ENCODE measurements at regions of chr15 and their contacts with region 1.

Region 1: GRCh38 chr15:54273928-54274327 is 295.7 kb downstream of the UNC13C start:
- DNase-seq: peak in 1 of 2 experiments; percentile 9
- H3K4me3 ChIP-seq: no peak overlapping the region
- H3K27ac ChIP-seq: no peak overlapping the region
- H3K4me1 ChIP-seq: no peaks in the 10 kb centered on the region
- H3K27me3 ChIP-seq: no peaks in the 10 kb centered on the region
- CTCF ChIP-seq: peak; percentile 39 to 70 (median 56)
- EP300 ChIP-seq: no peak
- POLR2A ChIP-seq: no peak
- RAD21 ChIP-seq: peak; percentile 56 to 66

Region 2: GRCh38 chr15:54253543-54253942 is 20.4 kb before region 1 on chr15:
- CTCF ChIA-PET with region 1: interaction called, 12 read pairs
- POLR2A ChIA-PET with region 1: no interaction called
- DNase-seq: no peak
- H3K4me3 ChIP-seq: no peak overlapping the region
- H3K27ac ChIP-seq: no peak overlapping the region
- H3K4me1 ChIP-seq: no peaks in the 10 kb centered on the region
- H3K27me3 ChIP-seq: no peaks in the 10 kb centered on the region
- CTCF ChIP-seq: no peak
- EP300 ChIP-seq: no peak
- POLR2A ChIP-seq: no peak
- RAD21 ChIP-seq: no peak

Region 3: DNA sequence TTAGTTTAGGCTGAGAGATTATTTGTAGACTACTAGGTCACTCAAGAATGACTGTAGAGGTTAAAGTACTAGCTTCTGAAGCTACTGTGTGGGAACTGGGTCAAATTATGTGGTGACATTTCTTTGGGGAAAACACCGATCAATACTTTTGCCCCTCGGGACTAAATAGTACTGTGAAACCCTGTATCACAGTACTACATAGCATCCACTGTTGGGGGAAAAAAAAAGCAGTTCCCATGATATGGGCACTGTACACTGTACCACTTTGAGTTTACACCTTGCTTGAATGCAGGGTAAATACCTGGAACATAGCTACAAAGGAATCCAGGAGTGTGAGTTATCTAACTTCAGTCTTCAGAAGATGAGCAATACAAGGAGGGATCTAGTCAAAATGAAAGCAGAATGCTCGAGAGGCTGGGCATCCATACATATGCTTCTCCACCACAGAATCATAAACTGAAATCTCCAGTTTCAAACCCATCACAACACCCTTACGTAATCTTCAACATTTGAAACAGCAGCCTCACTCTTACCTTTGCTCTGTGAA is 15.7 kb after region 1 on chr15:
- CTCF ChIA-PET with region 1: interaction called, 10 read pairs
- POLR2A ChIA-PET with region 1: no interaction called
- DNase-seq: no peak
- H3K4me3 ChIP-seq: no peak overlapping the region
- H3K27ac ChIP-seq: no peak overlapping the region
- H3K4me1 ChIP-seq: no peaks in the 10 kb centered on the region
- H3K27me3 ChIP-seq: no peaks in the 10 kb centered on the region
- CTCF ChIP-seq: no peak
- EP300 ChIP-seq: no peak
- POLR2A ChIP-seq: no peak
- RAD21 ChIP-seq: no peak